Mammary epithelial cell (primary cell): ENCODE measurements at regions of chr3 and their contacts with region 1.

Region 1: DNA sequence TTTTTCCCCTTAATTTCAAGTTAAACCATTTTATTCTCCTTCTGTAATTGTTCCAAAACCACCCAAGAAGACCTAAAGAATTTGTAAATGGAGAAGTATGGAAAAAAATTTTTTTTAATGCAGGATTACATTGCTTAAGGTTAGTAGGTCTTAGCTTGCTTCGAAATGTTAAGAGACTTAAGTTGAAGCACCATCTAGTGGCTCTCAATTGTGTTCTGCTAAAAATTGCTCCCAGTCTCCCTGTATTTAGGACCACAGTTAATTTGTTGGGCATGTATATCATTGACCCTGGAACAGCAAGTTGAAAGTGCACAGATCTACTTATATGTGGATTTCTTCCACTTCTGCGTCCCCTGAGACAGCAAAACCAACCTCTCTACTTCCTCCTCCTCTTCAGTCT is 32.4 kb downstream of the CD200R1L start:
- DNase-seq: peak; percentile 46
- H3K4me3 ChIP-seq: no peak overlapping the region
- H3K27ac ChIP-seq: no peak overlapping the region
- H3K4me1 ChIP-seq: peaks cover 7% of the 10 kb centered on the region
- H3K27me3 ChIP-seq: no peaks in the 10 kb centered on the region
- CTCF ChIP-seq: peak; percentile 38 to 66

Region 2: GRCh38 chr3:112709911-112710310 is 104.4 kb before region 1 on chr3:
- CTCF ChIA-PET with region 1: no interaction called
- dilution Hi-C with region 1: no loop called
- in situ Hi-C with region 1: no loop called
- intact Hi-C with region 1: no loop called
- DNase-seq: no peak
- H3K4me3 ChIP-seq: no peak overlapping the region
- H3K27ac ChIP-seq: no peak overlapping the region
- H3K4me1 ChIP-seq: no peaks in the 10 kb centered on the region
- H3K27me3 ChIP-seq: no peaks in the 10 kb centered on the region
- CTCF ChIP-seq: no peak

Region 3: DNA sequence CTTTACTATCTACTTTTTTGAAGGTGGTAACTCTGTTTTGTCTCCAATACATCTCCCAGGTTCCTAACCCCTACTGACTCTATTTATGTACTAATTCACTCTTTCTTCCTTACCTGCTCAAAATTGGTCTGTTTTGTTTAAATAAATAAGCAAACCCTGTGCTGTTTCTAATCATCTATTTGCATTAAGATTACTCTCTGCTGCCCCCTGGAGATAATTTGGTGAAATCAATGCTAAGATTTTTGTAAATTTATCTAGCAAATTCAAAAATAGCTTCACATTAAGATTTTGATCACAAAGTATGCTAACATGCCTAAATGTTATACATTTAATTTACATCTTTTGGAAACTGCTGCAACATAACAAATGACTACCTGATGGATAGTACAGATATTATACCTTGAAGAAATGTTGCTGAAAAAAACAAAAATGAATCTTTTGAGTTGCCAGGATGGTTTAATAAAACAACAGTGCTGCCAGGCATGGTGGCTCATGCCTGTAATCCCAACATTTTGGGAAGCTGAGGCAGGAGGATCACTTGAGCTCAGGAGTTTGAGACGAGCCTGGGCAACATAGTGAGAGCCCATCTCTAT is 165.1 kb after region 1 on chr3:
- CTCF ChIA-PET with region 1: no interaction called
- dilution Hi-C with region 1: no loop called
- in situ Hi-C with region 1: no loop called
- intact Hi-C with region 1: loop called (anchors 5 kb)
- DNase-seq: peak; percentile 5
- H3K4me3 ChIP-seq: no peak overlapping the region
- H3K27ac ChIP-seq: no peak overlapping the region
- H3K4me1 ChIP-seq: no peaks in the 10 kb centered on the region
- H3K27me3 ChIP-seq: no peaks in the 10 kb centered on the region
- CTCF ChIP-seq: peak; percentile 56 to 58

Region 4: GRCh38 chr3:113079218-113079961 is 265.1 kb after region 1 on chr3:
- CTCF ChIA-PET with region 1: no interaction called
- dilution Hi-C with region 1: no loop called
- in situ Hi-C with region 1: no loop called
- intact Hi-C with region 1: no loop called
- DNase-seq: no peak
- H3K4me3 ChIP-seq: no peak overlapping the region
- H3K27ac ChIP-seq: no peak overlapping the region
- H3K4me1 ChIP-seq: no peaks in the 10 kb centered on the region
- H3K27me3 ChIP-seq: no peaks in the 10 kb centered on the region
- CTCF ChIP-seq: no peak